ENCODE measurements at regions of chr5 and their contacts with region 1.

Region 1: DNA sequence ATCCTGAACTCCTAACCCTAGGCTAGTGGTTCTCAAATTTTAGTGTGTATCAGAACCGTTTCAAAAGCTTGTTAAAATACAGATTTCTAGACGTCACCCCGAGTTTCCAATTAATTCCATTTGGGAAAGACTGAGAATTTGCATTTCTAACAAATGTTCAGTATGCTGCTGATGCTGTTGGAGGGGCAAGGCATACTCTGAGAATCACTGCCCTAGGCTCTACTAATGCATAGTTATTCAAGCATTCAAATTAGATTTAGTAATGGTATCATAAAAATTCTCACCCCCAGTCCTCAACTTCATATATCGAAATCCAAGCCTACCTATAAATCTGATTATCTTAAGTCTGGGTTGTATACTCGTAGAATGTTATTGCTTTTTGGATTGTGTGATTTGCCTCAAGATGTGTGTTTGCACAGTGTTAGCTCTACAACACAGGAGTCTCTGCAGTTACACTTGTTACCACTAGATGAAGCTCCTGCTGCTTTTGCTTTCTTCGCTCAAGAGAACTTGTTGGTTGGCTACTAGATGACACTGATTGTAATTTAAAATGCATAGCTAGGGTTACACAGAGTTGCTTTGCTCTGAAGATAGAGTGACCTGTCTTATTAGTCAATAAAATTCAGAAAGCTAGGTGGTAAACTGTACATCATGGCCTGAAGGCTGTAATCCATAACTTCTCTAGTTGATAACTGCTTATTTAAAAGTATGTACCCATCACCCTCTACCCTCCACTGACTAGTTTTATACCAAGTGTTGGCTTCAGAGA is 7.5 kb upstream of the ERAP2 start:
- DNase-seq: peak; percentile 77
- ATAC-seq: peak; percentile 84
- H3K4me3 ChIP-seq: no peak overlapping the region
- H3K4me3 Mint-ChIP-seq: no peak overlapping the region
- H3K27ac ChIP-seq: no peak overlapping the region
- H3K27ac Mint-ChIP-seq: peak overlapping the region; percentile 4
- H3K4me1 ChIP-seq: peaks cover 31 to 37% of the 10 kb centered on the region in 2 donors
- H3K4me1 Mint-ChIP-seq: peaks cover 46% of the 10 kb centered on the region
- H3K27me3 ChIP-seq: no peaks in the 10 kb centered on the region
- H3K27me3 Mint-ChIP-seq: no peaks in the 10 kb centered on the region
- CTCF ChIP-seq: peak; percentile 93

Region 2: GRCh38 chr5:96651948-96652753 is 216.6 kb before region 1 on chr5:
- CTCF ChIA-PET with region 1: no interaction called
- POLR2A ChIA-PET with region 1: no interaction called
- intact Hi-C with region 1: no loop called
- DNase-seq: no peak
- ATAC-seq: no peak
- H3K4me3 ChIP-seq: no peak overlapping the region
- H3K4me3 Mint-ChIP-seq: no peak overlapping the region
- H3K27ac ChIP-seq: no peak overlapping the region
- H3K27ac Mint-ChIP-seq: no peak overlapping the region
- H3K4me1 ChIP-seq: no peaks in the 10 kb centered on the region
- H3K4me1 Mint-ChIP-seq: peaks cover 7% of the 10 kb centered on the region
- H3K27me3 ChIP-seq: peaks cover 0 to 16% (median 8%) of the 10 kb centered on the region in 4 experiments
- H3K27me3 Mint-ChIP-seq: peaks cover 24% of the 10 kb centered on the region
- CTCF ChIP-seq: peak; percentile 26

Region 3: DNA sequence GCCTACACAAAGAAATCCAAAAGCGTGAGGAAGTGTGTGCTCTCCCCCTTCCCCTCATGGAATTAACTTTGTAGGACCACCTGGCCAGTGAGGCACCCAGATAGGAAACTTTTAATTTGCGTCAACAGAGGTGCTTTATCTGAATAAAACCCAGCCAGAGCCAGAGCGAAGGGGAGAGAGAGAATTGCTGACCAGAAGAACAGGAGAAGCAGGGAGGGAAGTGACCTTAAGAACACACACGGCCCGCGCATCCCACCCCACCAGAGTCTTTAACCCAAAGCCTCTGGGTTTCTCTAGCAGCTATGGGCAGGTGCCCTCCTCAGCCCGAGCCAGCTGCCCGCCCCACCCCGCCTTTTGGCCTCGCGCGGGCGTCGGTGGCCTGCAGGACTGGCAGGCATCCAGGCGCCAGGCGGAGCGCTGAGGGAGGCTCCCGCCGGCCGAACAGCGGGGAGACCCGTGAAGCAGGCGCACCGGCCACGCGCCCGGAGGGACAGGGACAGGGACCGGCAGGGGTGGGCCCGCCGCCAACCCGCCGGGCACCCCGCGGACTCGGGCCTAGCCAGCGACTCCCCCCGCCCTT is 61.6 kb before region 1 on chr5:
- CTCF ChIA-PET with region 1: interaction called, 17 read pairs
- POLR2A ChIA-PET with region 1: interaction called, 9 read pairs
- intact Hi-C with region 1: loop called (anchors 2 kb)
- DNase-seq: no peak
- ATAC-seq: peak; percentile 19
- H3K4me3 ChIP-seq: peak overlapping the region; percentile 47 to 86 (median 73)
- H3K4me3 Mint-ChIP-seq: peak overlapping the region; percentile 90
- H3K27ac ChIP-seq: peak overlapping the region; percentile 86 to 90
- H3K27ac Mint-ChIP-seq: peak overlapping the region; percentile 99
- H3K4me1 ChIP-seq: peaks cover 25 to 32% of the 10 kb centered on the region in 2 donors
- H3K4me1 Mint-ChIP-seq: peaks cover 49% of the 10 kb centered on the region
- H3K27me3 ChIP-seq: no peaks in the 10 kb centered on the region
- H3K27me3 Mint-ChIP-seq: no peaks in the 10 kb centered on the region
- CTCF ChIP-seq: no peak

Region 4: DNA sequence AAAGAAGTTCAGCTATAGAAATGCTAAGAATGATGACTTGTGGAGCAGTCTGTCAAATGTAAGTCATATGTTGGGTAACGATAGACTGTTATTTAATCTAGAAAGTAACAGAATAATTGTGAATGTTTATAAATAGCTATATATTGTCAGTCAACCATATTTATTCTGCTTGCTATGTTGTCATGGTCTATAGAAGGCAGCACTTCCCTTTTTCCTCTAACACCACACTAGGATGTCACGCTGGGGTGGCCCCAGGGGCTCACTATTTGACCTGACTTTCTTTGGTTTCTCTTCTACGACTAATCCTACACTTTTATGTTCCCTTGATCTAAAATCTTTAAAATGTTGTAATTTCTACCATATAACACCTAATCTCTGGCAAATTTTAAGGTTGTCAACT is 28.0 kb after region 1 on chr5:
- CTCF ChIA-PET with region 1: interaction called, 51 read pairs
- POLR2A ChIA-PET with region 1: interaction called, 4 read pairs
- intact Hi-C with region 1: loop called (anchors 1 kb)
- DNase-seq: peak; percentile 86
- ATAC-seq: peak; percentile 97
- H3K4me3 ChIP-seq: peak overlapping the region; percentile 24 to 65 (median 45)
- H3K4me3 Mint-ChIP-seq: peak overlapping the region; percentile 80
- H3K27ac ChIP-seq: peak overlapping the region; percentile 96 to 98
- H3K27ac Mint-ChIP-seq: peak overlapping the region; percentile 85
- H3K4me1 ChIP-seq: peaks cover 16 to 18% of the 10 kb centered on the region in 2 donors
- H3K4me1 Mint-ChIP-seq: peaks cover 32% of the 10 kb centered on the region
- H3K27me3 ChIP-seq: no peaks in the 10 kb centered on the region
- H3K27me3 Mint-ChIP-seq: no peaks in the 10 kb centered on the region
- CTCF ChIP-seq: no peak

Region 5: DNA sequence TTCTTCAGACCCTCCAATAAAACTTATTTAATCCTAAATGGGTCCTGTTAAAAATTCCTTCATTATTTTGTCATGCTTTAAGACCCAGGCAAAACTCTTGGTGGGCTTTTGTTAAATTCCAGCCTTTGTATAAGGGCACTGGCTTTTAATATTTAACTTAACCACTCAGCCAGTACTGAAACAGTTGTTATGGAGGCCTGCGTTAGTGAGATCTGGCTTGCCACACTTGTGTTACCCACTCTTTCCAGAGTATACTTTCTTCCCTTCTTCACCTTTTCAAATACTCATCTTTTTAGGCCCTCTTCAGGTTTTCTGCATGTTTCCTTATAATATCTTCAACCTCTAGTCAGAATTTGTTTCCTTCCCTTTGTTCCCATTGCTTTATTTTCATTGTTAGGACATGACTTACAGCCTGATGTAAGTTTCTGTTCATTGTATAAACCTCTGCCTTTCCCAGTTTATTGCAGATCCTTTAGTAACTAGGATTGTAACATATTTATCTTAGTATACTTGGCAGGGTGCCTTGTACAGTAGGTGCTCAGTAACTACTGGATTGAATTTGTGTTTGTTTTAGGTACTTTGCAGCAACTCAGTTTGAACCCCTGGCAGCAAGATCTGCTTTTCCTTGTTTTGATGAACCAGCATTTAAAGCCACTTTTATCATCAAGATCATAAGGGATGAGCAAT is 115.9 kb after region 1 on chr5:
- CTCF ChIA-PET with region 1: interaction called, 30 read pairs
- POLR2A ChIA-PET with region 1: no interaction called
- intact Hi-C with region 1: no loop called
- DNase-seq: no peak
- ATAC-seq: no peak
- H3K4me3 ChIP-seq: no peak overlapping the region
- H3K4me3 Mint-ChIP-seq: no peak overlapping the region
- H3K27ac ChIP-seq: no peak overlapping the region
- H3K27ac Mint-ChIP-seq: no peak overlapping the region
- H3K4me1 ChIP-seq: no peaks in the 10 kb centered on the region
- H3K4me1 Mint-ChIP-seq: peaks cover 15% of the 10 kb centered on the region
- H3K27me3 ChIP-seq: no peaks in the 10 kb centered on the region
- H3K27me3 Mint-ChIP-seq: no peaks in the 10 kb centered on the region
- CTCF ChIP-seq: no peak

Region 6: GRCh38 chr5:97046270-97046982 is 177.6 kb after region 1 on chr5:
- CTCF ChIA-PET with region 1: interaction called, 11 read pairs
- POLR2A ChIA-PET with region 1: no interaction called
- intact Hi-C with region 1: no loop called
- DNase-seq: no peak
- ATAC-seq: no peak
- H3K4me3 ChIP-seq: no peak overlapping the region
- H3K4me3 Mint-ChIP-seq: no peak overlapping the region
- H3K27ac ChIP-seq: no peak overlapping the region
- H3K27ac Mint-ChIP-seq: no peak overlapping the region
- H3K4me1 ChIP-seq: no peaks in the 10 kb centered on the region
- H3K4me1 Mint-ChIP-seq: no peaks in the 10 kb centered on the region
- H3K27me3 ChIP-seq: peaks cover 0 to 3% (median 0%) of the 10 kb centered on the region in 4 experiments
- H3K27me3 Mint-ChIP-seq: peaks cover 9% of the 10 kb centered on the region
- CTCF ChIP-seq: no peak

Region 7: DNA sequence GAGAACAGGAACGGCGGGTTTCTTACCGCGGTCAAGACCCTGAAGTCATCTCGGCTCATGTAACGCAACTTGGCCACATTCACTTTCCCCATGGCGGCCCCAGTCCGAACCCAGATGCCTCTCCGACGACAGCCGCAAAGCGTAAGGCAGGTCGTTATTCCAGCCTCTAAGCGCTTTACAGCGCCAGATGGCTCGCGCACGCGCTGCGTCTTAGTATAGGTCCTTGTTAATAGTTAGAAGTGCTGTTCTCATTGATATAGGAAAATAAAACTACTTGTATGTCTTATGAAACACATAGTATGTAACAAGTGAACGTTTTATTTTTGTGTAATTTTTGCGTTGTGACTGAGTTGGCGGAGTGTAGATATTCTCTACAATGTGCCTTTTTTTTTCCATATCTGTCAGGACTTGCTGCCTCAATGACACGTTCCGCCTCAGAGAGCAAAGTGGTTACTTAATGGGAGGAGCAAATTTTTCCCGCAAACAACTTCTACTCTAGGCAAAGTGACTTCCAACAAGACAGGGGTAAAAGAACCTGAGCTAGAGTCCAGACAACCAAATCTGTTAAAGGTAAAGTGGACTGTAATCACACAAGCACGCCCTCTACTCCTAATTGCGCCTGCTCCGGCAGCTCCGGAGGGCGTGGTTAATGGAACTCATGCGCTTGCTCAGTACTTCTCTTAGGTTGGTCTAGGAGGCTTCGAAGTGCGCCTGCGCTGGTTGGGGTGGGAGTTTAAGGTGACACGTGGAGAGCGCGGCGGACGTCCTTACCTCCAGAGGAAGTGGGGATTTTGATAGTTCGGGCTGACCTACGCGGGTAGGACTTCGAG is 314.5 kb after region 1 on chr5 and contains the start of gene RIOK2:
- CTCF ChIA-PET with region 1: interaction called, 5 read pairs
- POLR2A ChIA-PET with region 1: no interaction called
- intact Hi-C with region 1: loop called (anchors 5 kb)
- DNase-seq: peak; percentile 93
- ATAC-seq: peak; percentile 87
- H3K4me3 ChIP-seq: peak within 1 kb of the TSS; percentile 68 to 96 (median 88)
- H3K4me3 Mint-ChIP-seq: peak within 1 kb of the TSS; percentile 97
- H3K27ac ChIP-seq: peak within 1 kb of the TSS; percentile 91 to 99
- H3K27ac Mint-ChIP-seq: peak within 1 kb of the TSS; percentile 100
- H3K4me1 ChIP-seq: peaks cover 12 to 15% of the 10 kb centered on the region in 2 donors
- H3K4me1 Mint-ChIP-seq: peaks cover 33% of the 10 kb centered on the region
- H3K27me3 ChIP-seq: no peaks in the 10 kb centered on the region
- H3K27me3 Mint-ChIP-seq: no peaks in the 10 kb centered on the region
- CTCF ChIP-seq: no peak
- total RNA-seq, gene RIOK2: 32.8 and 37.2 TPM in 2 replicates

Measured in B cell (primary cell).